Posterior cingulate gyrus (tissue), 11 donors: ENCODE measurements at regions of chr3 and their contacts with region 1.

Region 1: GRCh38 chr3:139561959-139562676 is 22.6 kb upstream of the RBP1 start:
- DNase-seq: peak in 2 of 10 donors; percentile 27 to 33

Region 2: GRCh38 chr3:139120086-139121056 is 441.7 kb before region 1 on chr3:
- intact Hi-C with region 1: no loop called
- DNase-seq: no peak

Region 3: DNA sequence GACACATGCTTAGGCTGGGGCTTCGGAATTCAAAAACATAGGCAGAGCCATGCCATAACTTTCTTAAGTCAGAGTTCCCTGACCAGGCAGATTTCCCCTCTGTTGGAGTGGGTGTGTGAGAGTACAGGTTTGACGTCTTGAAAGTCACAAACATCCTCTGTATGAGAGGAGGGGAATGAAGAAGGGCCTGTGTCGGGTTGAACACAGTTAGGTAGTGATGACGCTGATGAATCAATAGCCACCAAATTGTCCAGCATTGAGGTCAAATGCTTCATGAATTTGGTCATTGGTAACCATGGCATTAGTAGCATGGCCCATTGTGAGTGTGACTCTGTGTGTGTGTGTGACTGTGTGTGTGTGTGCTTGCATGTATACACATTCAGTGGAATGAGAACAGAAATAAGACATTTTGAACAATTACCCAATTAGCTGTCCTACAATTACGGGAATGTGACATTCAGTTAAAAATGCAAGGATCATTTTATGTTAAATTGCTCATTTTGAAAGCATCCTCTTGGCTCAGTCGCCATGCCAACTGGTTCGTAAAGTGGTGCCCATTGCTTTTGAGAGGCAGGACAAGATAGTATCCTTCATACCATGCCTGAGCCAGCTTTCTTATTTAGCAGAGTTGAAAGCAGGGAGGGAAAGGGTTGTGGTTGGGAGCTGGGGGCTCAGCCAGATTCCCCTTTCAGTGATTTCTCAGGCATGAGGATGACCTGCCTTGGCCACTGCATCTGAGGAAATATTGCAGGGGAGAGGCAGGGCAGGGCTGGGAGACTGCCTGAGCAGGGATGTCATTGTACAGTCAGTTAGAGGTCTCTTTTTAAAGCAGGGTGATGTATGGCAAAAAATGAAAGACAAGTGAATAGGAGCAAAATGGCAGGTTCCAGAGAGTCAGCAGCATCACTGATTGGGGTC is 121.2 kb before region 1 on chr3:
- intact Hi-C with region 1: loop called (anchors 5 kb)
- DNase-seq: no peak

Region 4: GRCh38 chr3:139499536-139499935 is 62.6 kb before region 1 on chr3:
- intact Hi-C with region 1: no loop called
- DNase-seq: no peak

Region 5: GRCh38 chr3:139519998-139520737 is 42.0 kb before region 1 on chr3:
- intact Hi-C with region 1: loop called (anchors 5 kb)
- DNase-seq: peak in 1 of 10 donors; percentile 75